ENCODE measurements at regions of chr11 and their contacts with region 1.

Region 1: DNA sequence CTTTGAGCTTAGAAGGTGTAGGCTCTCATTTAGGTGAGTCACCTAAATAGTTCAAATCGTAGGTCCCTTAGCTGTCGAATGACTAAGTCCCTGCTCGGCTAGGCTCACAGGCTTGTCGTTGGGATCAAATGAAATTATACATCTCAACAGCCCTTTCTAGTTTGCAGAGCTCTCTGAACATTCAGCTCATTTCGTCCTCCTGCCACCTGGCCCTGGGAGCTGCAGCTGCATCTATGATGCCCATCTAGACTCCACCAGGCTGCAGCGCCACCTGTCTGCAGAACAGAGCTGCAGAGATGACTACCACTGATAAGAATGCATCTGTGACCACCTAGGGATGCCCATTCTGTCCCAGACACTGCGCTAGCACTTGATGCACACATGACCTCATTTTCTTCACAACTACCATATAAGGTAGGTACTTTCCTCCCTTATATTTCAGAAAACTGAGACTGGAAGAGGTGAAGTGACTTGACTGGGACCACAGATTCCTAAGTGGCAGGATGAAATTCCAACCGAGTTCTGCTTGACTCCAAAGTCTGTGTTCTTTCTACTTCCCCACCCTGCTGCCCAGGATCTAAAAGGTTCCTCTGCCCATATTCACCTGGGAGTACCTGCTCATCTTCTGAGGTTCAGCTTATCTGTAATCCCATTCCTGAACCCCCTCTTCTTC is 141.1 kb upstream of the NARS2 start:
- DNase-seq: peak; percentile 36
- H3K4me3 ChIP-seq: no peak overlapping the region
- H3K27ac ChIP-seq: no peak overlapping the region
- H3K4me1 ChIP-seq: no peaks in the 10 kb centered on the region
- H3K27me3 ChIP-seq: no peaks in the 10 kb centered on the region
- CTCF ChIP-seq: peak; percentile 55 to 66
- POLR2A ChIP-seq: no peak

Region 2: GRCh38 chr11:78586452-78587046 is 129.2 kb before region 1 on chr11:
- CTCF ChIA-PET with region 1: no interaction called
- POLR2A ChIA-PET with region 1: no interaction called
- dilution Hi-C with region 1: no loop called
- intact Hi-C with region 1: no loop called
- DNase-seq: peak; percentile 23
- H3K4me3 ChIP-seq: no peak overlapping the region
- H3K27ac ChIP-seq: no peak overlapping the region
- H3K4me1 ChIP-seq: no peaks in the 10 kb centered on the region
- H3K27me3 ChIP-seq: peaks cover 15 to 25% of the 10 kb centered on the region in 2 experiments
- CTCF ChIP-seq: peak; percentile 23 to 30
- POLR2A ChIP-seq: no peak

Region 3: DNA sequence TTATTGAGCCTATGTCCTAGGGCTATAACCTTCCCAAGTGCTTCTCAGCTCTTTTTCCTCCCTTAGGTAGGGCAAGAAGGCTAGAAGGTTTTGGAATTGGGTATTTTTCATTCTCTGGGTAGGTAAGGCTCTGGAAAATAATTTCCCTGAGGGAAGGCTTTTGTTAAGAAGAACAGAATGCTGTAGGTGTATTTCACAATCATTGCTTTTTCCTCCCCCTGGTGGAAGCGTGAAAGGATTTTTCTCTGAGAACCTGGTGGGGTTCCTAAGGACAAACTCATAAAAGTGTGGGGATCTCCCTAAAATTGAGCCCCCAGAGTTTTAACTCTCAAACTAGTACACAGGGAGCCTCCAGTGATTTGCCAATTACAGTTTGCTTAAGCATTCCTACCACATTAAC is 100.1 kb before region 1 on chr11:
- CTCF ChIA-PET with region 1: no interaction called
- POLR2A ChIA-PET with region 1: no interaction called
- dilution Hi-C with region 1: no loop called
- intact Hi-C with region 1: no loop called
- DNase-seq: no peak
- H3K4me3 ChIP-seq: no peak overlapping the region
- H3K27ac ChIP-seq: no peak overlapping the region
- H3K4me1 ChIP-seq: no peaks in the 10 kb centered on the region
- H3K27me3 ChIP-seq: no peaks in the 10 kb centered on the region
- CTCF ChIP-seq: no peak
- POLR2A ChIP-seq: no peak

Region 4: GRCh38 chr11:78699609-78700135 is 16.1 kb before region 1 on chr11:
- CTCF ChIA-PET with region 1: interaction called, 13 read pairs
- POLR2A ChIA-PET with region 1: no interaction called
- dilution Hi-C with region 1: no loop called
- intact Hi-C with region 1: no loop called
- DNase-seq: no peak
- H3K4me3 ChIP-seq: no peak overlapping the region
- H3K27ac ChIP-seq: no peak overlapping the region
- H3K4me1 ChIP-seq: no peaks in the 10 kb centered on the region
- H3K27me3 ChIP-seq: no peaks in the 10 kb centered on the region
- CTCF ChIP-seq: no peak
- POLR2A ChIP-seq: no peak

Region 5: DNA sequence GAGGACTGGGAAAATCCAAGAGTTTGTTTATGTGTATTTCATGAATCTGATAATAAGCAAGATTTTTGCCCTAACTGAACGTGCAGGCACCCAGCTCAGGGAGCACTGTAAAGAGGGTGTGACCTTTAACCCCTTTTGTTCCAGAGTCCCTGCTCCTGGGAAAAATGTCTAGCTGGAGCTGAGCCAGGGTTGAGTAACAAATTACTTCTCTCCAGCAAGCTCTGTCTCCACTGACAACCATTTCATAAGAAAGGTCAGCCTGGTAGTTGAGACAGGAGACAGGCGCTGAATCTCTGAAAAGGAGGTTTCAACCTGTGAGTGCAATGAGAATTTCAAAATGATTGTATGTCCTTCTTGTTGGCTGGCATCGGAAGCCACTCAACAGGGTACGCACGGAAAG is 15.3 kb after region 1 on chr11:
- CTCF ChIA-PET with region 1: interaction called, 10 read pairs
- POLR2A ChIA-PET with region 1: no interaction called
- dilution Hi-C with region 1: no loop called
- intact Hi-C with region 1: no loop called
- DNase-seq: no peak
- H3K4me3 ChIP-seq: no peak overlapping the region
- H3K27ac ChIP-seq: no peak overlapping the region
- H3K4me1 ChIP-seq: no peaks in the 10 kb centered on the region
- H3K27me3 ChIP-seq: no peaks in the 10 kb centered on the region
- CTCF ChIP-seq: no peak
- POLR2A ChIP-seq: no peak

Measured in endothelial cell of umbilical vein (primary cell).